ENCODE measurements at regions of chr9 and their contacts with region 1.

Region 1: GRCh38 chr9:21812946-21813568 is 10.6 kb downstream of the MTAP start:
- DNase-seq: peak in 9 of 10 donors; percentile 49 to 95 (median 77)

Region 2: DNA sequence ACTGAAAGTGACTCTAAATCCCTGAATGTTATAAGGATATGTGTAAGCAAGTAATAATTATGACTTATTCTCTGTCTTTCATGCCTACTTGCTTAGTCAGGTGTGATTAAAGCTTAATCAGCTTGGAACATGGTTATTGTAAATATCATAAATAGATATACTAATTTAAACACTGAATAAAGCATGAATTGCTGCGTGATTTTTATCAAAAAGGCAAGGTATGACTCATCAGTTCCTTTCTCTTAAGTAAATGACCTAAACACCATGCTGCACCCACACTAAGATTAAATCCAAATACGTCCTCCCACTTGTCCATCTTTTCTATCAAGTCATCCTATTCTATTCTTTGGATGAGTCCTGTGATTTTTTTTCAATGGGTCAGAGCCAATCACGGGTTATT is 135.2 kb before region 1 on chr9:
- intact Hi-C with region 1: no loop called
- DNase-seq: no peak

Region 3: GRCh38 chr9:22008736-22009562 is 195.9 kb after region 1 on chr9 and contains the start of gene CDKN2B:
- intact Hi-C with region 1: loop called (anchors 2 kb)
- DNase-seq: peak; percentile 77 to 98 (median 89)

Region 4: GRCh38 chr9:22037954-22038690 is 225.1 kb after region 1 on chr9:
- intact Hi-C with region 1: loop called (anchors 2 kb)
- DNase-seq: no peak

Region 5: DNA sequence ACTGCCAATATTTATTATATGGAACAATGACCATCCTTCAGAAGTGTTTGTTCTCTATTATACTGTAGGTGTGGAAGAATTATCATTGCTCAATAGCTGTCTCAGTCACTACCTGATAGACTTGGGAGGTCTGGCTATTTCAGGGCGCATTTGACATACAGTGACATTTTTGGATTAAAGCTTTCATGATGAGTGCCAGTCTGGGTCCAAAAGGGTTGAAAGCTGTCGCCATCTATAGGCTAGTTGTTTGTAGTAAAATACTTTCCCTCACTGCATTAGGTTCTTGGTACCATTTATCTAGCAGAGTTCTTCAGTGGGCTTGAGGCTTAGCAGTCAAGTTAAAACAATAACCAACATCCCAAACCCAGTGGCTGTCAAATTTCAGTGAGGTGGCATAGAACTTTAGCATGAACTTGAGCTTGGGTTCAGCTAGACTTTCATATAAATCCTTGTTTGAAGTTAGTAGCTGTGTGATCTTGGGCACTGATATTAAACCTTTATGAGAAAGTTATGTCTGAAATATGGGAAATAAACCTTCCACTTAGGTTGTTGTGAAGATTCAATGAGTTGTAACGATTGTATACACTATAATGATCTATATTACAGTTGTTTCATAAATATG is 306.6 kb after region 1 on chr9:
- intact Hi-C with region 1: loop called (anchors 10 kb)
- DNase-seq: no peak

Region 6: GRCh38 chr9:22238809-22239684 is 426.0 kb after region 1 on chr9:
- intact Hi-C with region 1: loop called (anchors 5 kb)
- DNase-seq: no peak

Region 7: GRCh38 chr9:22452415-22453010 is 639.5 kb after region 1 on chr9:
- intact Hi-C with region 1: loop called (anchors 5 kb)
- DNase-seq: peak in 7 of 10 donors; percentile 33 to 81 (median 45)